Caco-2 (cell line): ENCODE measurements at regions of chr5 and their contacts with region 1.

Region 1: GRCh38 chr5:176959051-176959450 is 47.5 kb downstream of the UIMC1 start:
- DNase-seq: peak in 1 of 2 experiments; percentile 22
- H3K4me3 ChIP-seq: no peak overlapping the region
- H3K4me3 Mint-ChIP-seq: no peak overlapping the region
- H3K27ac Mint-ChIP-seq: no peak overlapping the region
- H3K4me1 ChIP-seq: no peaks in the 10 kb centered on the region
- H3K4me1 Mint-ChIP-seq: no peaks in the 10 kb centered on the region
- H3K27me3 ChIP-seq: no peaks in the 10 kb centered on the region
- H3K27me3 Mint-ChIP-seq: no peaks in the 10 kb centered on the region
- CTCF ChIP-seq: peak; percentile 34 to 47

Region 2: DNA sequence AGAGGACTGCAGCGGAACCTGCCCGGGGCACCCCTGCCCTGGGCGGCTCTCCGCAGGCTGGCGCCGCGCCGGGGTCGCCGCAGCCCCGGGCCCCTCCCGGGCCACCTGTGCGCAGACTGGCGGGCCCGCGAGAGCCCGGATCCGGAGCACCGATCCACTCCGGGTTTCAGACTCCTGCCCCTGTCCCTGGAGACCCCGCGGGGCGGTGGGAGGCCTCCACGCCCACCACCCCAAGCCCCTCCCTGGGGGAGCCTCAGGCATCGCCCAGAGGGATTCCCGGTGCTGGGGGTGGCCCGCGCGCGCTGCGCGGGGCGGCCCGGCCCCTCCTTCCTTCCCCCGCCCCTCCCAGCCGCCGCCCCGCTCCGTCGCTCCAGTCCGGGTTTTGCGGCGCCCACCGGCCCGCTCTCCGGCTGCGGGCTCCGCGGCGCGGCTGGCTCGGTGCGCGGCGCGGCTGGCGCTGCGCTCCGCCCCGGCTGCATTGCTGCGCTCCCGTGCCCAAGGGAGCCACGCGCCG is 148.9 kb before region 1 on chr5 and contains the start of gene UNC5A:
- CTCF ChIA-PET with region 1: no interaction called
- POLR2A ChIA-PET with region 1: no interaction called
- intact Hi-C with region 1: loop called (anchors 2 kb)
- DNase-seq: peak in 1 of 2 experiments; percentile 85
- H3K4me3 ChIP-seq: peak within 1 kb of the TSS; percentile 42
- H3K4me3 Mint-ChIP-seq: peak within 1 kb of the TSS; percentile 85
- H3K27ac Mint-ChIP-seq: no peak within 1 kb of the TSS
- H3K4me1 ChIP-seq: peaks cover 7% of the 10 kb centered on the region
- H3K4me1 Mint-ChIP-seq: peaks cover 15% of the 10 kb centered on the region
- H3K27me3 ChIP-seq: peaks cover 6% of the 10 kb centered on the region; the same call in 1 of the 2 replicates
- H3K27me3 Mint-ChIP-seq: peaks cover 30% of the 10 kb centered on the region
- CTCF ChIP-seq: no peak
- total RNA-seq, gene UNC5A: 0.14 TPM in 1 of 2 replicates, not detected in the other

Region 3: DNA sequence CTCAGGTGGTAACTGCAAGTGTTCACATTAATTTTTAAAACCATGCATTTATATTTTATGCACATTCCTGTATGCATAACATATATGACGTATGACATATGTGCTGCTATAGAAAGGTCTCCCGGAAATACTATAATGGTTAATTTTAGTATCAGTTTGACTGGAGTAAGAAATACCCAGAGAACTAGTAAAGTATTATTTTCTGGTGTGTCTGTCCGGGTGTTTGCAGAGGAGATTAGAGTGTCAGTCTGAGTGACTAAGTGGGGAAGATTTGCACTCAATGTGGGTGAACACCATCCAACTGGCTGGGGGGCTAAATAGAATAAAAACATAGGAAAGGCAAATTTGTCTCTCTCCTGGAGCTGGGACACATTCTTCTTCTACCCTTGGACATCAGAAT is 20.6 kb after region 1 on chr5:
- CTCF ChIA-PET with region 1: no interaction called
- POLR2A ChIA-PET with region 1: no interaction called
- intact Hi-C with region 1: no loop called
- DNase-seq: no peak
- H3K4me3 ChIP-seq: no peak overlapping the region
- H3K4me3 Mint-ChIP-seq: no peak overlapping the region
- H3K27ac Mint-ChIP-seq: no peak overlapping the region
- H3K4me1 ChIP-seq: no peaks in the 10 kb centered on the region
- H3K4me1 Mint-ChIP-seq: no peaks in the 10 kb centered on the region
- H3K27me3 ChIP-seq: no peaks in the 10 kb centered on the region
- H3K27me3 Mint-ChIP-seq: no peaks in the 10 kb centered on the region
- CTCF ChIP-seq: no peak

Region 4: DNA sequence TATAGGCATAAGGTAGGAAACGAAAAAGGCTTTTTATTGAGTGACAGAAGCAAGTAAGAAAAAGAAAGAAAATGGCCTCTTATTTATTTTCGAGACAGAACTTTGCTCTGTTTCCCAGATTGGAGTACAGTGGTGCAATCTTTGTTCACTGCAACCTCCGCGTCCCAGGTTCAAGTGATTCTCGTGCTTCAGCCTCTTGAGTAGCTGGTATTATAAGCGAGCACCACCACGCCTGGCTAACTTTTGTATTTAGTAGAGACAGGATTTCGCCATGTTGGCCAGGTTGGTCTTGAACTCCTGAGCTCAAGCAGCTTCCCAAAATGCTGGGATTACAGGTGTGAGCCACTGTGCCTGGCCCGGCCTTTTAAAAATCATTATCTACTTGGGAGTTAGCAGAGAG is 245.2 kb after region 1 on chr5:
- CTCF ChIA-PET with region 1: no interaction called
- POLR2A ChIA-PET with region 1: no interaction called
- intact Hi-C with region 1: no loop called
- DNase-seq: no peak
- H3K4me3 ChIP-seq: no peak overlapping the region
- H3K4me3 Mint-ChIP-seq: no peak overlapping the region
- H3K27ac Mint-ChIP-seq: no peak overlapping the region
- H3K4me1 ChIP-seq: no peaks in the 10 kb centered on the region
- H3K4me1 Mint-ChIP-seq: no peaks in the 10 kb centered on the region
- H3K27me3 ChIP-seq: no peaks in the 10 kb centered on the region
- H3K27me3 Mint-ChIP-seq: no peaks in the 10 kb centered on the region
- CTCF ChIP-seq: no peak